Left colon (tissue), 2 donors: ENCODE measurements at regions of chr11 and their contacts with region 1.

Region 1: DNA sequence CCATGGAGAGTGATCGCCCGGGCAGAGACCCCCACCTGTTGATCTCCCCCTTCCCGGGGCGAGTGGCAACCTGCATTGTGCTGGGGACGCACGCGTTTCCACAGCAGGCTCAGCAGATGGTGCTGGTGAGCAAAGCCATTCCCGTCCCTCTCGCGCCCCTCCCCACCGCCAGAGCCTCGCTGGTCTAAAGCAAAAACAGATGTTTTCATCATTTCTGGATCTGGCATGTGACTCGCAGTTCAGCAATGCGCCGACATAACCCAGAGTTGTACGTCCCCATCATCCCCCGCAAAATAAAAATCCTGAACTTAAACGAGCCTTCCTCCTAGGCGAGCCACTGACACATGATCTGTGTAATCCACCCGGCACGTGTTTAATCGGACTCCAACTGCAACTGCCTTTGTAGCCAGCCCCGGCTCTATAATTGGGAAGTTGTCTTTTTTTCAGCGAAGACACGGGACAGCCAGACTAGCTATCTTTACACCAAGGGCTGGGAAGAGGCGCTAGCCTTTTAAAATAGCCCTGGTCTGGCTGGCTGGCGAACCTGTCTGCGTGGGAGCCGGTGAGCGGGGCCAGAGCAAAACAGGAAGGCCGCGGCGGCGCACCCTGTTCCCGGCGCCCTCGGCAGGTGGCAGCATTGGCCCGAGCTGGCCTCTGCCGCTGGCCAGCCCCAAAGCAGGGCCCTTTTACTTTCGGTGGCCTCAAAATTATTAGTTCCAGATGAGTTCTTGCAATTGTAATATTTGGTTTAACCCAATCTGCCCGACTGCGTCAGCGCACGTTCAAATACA is 203.0 kb upstream of the SORL1-AS1 start:
- DNase-seq: peak; percentile 68 to 84
- ATAC-seq: peak; percentile 95

Region 2: GRCh38 chr11:121473064-121473777 is 182.5 kb before region 1 on chr11:
- intact Hi-C with region 1: no loop called
- DNase-seq: no peak
- ATAC-seq: no peak

Region 3: GRCh38 chr11:121762820-121763219 is 107.1 kb after region 1 on chr11:
- intact Hi-C with region 1: no loop called
- DNase-seq: peak in 1 of 2 donors; percentile 3
- ATAC-seq: no peak

Region 4: GRCh38 chr11:122101625-122102291 is 446.0 kb after region 1 on chr11:
- intact Hi-C with region 1: loop called in 1 of 2 experiments (anchors 5 kb)
- DNase-seq: peak; percentile 21 to 40
- ATAC-seq: no peak

Region 5: DNA sequence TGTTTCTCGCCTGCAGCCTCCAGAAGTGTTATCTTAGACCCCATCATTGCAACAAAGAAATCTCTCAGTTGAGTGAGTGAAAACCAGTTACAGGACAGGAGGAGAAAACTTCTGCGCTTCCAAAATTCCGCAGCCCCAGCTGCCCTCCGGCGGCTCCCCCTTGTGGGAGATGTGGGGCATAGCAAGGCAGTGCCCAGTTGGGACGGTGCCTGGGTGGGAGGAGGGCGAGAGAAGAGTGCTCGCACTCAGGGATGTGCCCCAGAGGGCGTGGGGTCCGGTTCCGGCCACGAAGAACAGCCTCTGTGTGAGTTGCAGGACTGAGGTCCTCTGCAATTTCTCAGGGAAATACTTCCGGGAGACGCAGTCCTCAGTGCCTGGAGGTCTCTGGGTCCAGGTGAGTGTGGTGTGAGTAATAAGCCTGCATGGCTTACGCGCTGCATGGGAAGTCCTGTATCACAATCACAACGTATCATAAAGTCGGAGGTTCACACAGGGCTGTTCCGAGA is 547.3 kb after region 1 on chr11:
- intact Hi-C with region 1: loop called in 1 of 2 experiments (anchors 5 kb)
- DNase-seq: peak; percentile 25 to 49
- ATAC-seq: peak; percentile 83

Region 6: DNA sequence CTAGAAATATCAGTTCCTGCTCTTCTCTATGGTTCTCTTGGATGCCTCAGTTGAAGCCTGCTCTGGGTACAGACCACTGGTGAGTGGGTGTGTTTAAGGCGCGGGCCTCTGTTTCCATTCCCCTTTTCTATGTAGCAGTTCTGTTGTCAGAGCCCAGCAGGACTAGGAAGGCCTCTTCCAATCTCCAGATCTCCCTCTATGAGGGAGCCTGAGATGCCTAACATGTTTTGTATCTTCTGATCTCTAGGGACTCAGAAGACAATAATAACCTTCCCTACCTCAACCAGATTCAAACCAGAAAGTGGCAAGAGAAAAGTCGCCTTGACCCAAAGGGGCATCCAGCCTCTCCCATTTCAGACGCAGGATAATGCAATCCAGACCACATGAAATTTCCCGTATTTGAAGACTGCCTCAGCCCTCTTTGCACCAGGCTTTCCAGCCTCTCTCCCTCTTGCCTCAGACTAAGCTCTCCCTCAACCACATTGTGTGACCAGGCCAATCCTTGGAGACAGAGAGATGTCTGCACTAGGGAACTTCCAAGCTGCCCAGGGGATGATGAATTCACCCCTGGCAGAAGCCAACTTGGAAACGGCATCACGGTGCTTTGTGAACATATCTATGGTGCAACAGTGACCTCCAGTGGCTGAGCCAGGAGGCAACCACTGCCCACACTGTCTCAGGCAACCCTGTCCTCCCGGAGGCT is 849.7 kb after region 1 on chr11:
- intact Hi-C with region 1: loop called in 1 of 2 experiments (anchors 10 kb)
- DNase-seq: peak; percentile 36 to 68
- ATAC-seq: peak; percentile 81